ENCODE measurements at regions of chr1 and their contacts with region 1.

Region 1: DNA sequence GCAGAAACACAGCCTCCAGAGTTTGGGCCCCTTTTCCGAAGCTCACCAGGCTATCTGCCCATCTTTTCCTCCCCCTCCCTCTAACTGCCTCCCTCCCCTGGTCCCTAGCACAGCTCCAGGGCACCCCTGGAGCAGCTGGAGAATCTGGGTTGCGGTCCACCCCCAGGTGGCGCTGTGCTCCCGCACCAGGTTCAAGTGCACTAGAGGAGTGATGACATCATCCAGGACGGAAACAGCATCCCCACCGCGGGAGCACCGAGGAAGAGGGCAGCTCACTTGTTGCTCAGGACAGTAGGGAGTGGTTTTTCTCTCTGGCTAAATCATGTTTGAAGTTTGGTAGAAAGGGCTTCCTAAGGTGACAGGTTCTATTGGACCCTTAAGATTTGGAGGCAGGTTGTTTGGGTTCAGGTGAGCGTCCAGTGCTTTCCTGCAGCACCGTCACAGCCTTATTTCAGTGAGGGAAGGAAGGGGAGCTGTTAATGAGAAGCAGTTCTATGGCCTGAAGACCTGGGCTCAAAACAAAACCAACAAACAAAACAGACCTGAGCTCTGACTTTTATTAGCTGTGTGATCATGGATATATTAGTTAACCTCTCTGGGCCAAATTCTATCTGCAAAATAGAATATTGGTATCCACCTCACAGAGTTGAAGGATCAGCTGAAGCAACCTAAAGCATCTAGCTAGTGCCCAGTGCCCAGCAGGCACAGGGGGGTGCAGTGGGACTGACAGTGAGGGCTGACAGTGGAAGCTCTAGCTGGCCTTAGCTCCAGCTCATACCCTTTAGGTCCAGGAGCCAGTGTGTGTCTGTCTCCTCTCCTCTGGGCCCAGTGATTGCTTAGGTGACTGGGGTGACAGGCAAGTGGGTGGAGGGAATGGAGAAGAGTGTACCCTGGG is 7.5 kb downstream of the SHISA4 start:
- DNase-seq: peak; percentile 89
- ATAC-seq: peak; percentile 82 to 84

Region 2: GRCh38 chr1:201941420-201942128 is 45.4 kb after region 1 on chr1:
- intact Hi-C with region 1: loop called in 1 of 2 experiments (anchors 5 kb)
- DNase-seq: no peak
- ATAC-seq: peak in 1 of 2 donors; percentile 2

Region 3: GRCh38 chr1:201970334-201971159 is 74.4 kb after region 1 on chr1:
- intact Hi-C with region 1: loop called (anchors 1 to 5 kb)
- DNase-seq: no peak
- ATAC-seq: peak in 1 of 2 donors; percentile 43

Region 4: GRCh38 chr1:202112839-202113672 is 216.9 kb after region 1 on chr1:
- intact Hi-C with region 1: loop called in 1 of 2 experiments (anchors 10 kb)
- DNase-seq: peak; percentile 51
- ATAC-seq: peak; percentile 59 to 81